Activated B cell treated with CpG ODN at 0.5 μM for 24 hours (primary cell): ENCODE measurements at regions of chr22 and their contacts with region 1.

Region 1: GRCh38 chr22:33018232-33018864 is 39.8 kb downstream of the SYN3 start:
- DNase-seq: peak; percentile 48
- ATAC-seq: peak; percentile 75
- H3K4me3 Mint-ChIP-seq: no peak overlapping the region
- H3K27ac Mint-ChIP-seq: no peak overlapping the region
- H3K4me1 Mint-ChIP-seq: peaks cover 21% of the 10 kb centered on the region
- H3K27me3 Mint-ChIP-seq: no peaks in the 10 kb centered on the region
- CTCF ChIP-seq: peak; percentile 78

Region 2: GRCh38 chr22:32904044-32904443 is 114.3 kb before region 1 on chr22:
- CTCF ChIA-PET with region 1: no interaction called
- POLR2A ChIA-PET with region 1: no interaction called
- intact Hi-C with region 1: no loop called
- DNase-seq: no peak
- ATAC-seq: no peak
- H3K4me3 Mint-ChIP-seq: no peak overlapping the region
- H3K27ac Mint-ChIP-seq: no peak overlapping the region
- H3K4me1 Mint-ChIP-seq: no peaks in the 10 kb centered on the region
- H3K27me3 Mint-ChIP-seq: peaks cover 2% of the 10 kb centered on the region
- CTCF ChIP-seq: no peak

Region 3: GRCh38 chr22:33049119-33049729 is 30.9 kb after region 1 on chr22:
- CTCF ChIA-PET with region 1: interaction called, 49 read pairs
- POLR2A ChIA-PET with region 1: interaction called, 3 read pairs
- intact Hi-C with region 1: loop called (anchors 1 kb)
- DNase-seq: peak; percentile 35
- ATAC-seq: peak; percentile 65
- H3K4me3 Mint-ChIP-seq: no peak overlapping the region
- H3K27ac Mint-ChIP-seq: no peak overlapping the region
- H3K4me1 Mint-ChIP-seq: peaks cover 17% of the 10 kb centered on the region
- H3K27me3 Mint-ChIP-seq: peaks cover 27% of the 10 kb centered on the region
- CTCF ChIP-seq: peak; percentile 93

Region 4: DNA sequence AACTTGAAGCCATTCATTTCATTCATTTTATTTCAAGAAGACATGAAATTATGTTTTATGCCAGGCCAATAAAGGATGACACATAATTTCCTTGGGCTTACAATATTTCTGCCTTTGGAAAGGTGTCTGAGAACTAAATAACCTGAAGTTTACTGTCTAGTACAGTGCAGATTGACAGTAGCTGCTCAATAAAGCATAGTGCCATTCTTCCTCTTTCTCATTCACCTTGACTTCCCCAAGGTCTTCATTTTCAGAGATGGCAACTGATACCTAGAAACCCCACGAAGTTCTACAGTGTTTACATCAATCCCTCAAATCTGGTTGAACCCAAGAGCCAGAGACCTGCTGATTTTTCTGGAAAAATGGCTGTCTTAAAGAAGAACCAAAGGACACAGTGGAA is 184.1 kb after region 1 on chr22:
- CTCF ChIA-PET with region 1: interaction called, 80 read pairs
- POLR2A ChIA-PET with region 1: no interaction called
- intact Hi-C with region 1: loop called (anchors 1 kb)
- DNase-seq: no peak
- ATAC-seq: no peak
- H3K4me3 Mint-ChIP-seq: no peak overlapping the region
- H3K27ac Mint-ChIP-seq: no peak overlapping the region
- H3K4me1 Mint-ChIP-seq: peaks cover 35% of the 10 kb centered on the region
- H3K27me3 Mint-ChIP-seq: no peaks in the 10 kb centered on the region
- CTCF ChIP-seq: no peak

Region 5: GRCh38 chr22:33209930-33210784 is 191.8 kb after region 1 on chr22:
- CTCF ChIA-PET with region 1: interaction called, 80 read pairs
- POLR2A ChIA-PET with region 1: no interaction called
- intact Hi-C with region 1: loop called (anchors 1 kb)
- DNase-seq: peak; percentile 24
- ATAC-seq: peak; percentile 78
- H3K4me3 Mint-ChIP-seq: no peak overlapping the region
- H3K27ac Mint-ChIP-seq: no peak overlapping the region
- H3K4me1 Mint-ChIP-seq: peaks cover 14% of the 10 kb centered on the region
- H3K27me3 Mint-ChIP-seq: no peaks in the 10 kb centered on the region
- CTCF ChIP-seq: peak; percentile 74

Region 6: DNA sequence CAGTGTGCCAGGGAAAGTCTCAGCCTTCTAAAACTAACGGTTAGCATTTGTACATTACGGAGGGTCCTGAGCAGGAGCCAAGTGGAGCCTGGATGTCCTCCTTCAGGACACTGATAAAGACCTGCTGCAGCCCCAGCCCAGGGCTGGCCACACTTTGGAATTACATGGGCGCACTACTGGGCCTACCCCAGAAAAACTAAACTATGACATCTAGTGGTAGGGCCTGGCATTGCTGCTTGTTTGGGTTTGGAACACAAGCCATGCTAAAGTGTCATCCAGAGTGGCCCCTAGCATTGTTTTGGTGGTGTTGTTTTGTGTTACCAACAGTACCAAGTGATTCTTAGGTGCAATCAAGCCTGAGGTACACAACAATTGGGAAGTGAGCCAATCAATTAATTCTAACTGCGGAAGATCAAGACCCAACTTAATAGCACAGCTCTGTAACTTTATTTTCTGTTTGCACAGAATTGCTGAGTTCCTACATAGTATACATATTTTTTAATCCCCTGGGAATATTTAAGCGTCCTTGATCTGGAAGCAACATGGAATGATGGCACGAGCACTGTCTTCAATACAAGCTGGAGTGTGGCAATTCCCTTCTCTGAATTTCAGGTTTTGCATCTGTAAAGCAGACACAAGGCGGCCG is 561.2 kb after region 1 on chr22:
- CTCF ChIA-PET with region 1: interaction called, 6 read pairs
- POLR2A ChIA-PET with region 1: no interaction called
- intact Hi-C with region 1: loop called (anchors 2 kb)
- DNase-seq: peak; percentile 30
- ATAC-seq: peak; percentile 80
- H3K4me3 Mint-ChIP-seq: peak overlapping the region; percentile 42
- H3K27ac Mint-ChIP-seq: no peak overlapping the region
- H3K4me1 Mint-ChIP-seq: peaks cover 55% of the 10 kb centered on the region
- H3K27me3 Mint-ChIP-seq: no peaks in the 10 kb centered on the region
- CTCF ChIP-seq: peak; percentile 73